Activated CD4-positive, alpha-beta T cell treated with anti-CD3 and anti-CD28 coated beads for 36 hours (primary cell): ENCODE measurements at regions of chr14 and their contacts with region 1.

Region 1: GRCh38 chr14:24431569-24432258 is 2.0 kb downstream of the KHNYN start:
- DNase-seq: peak; percentile 96
- ATAC-seq: peak; percentile 70
- H3K4me3 Mint-ChIP-seq: peak overlapping the region; percentile 94
- H3K27ac Mint-ChIP-seq: peak overlapping the region; percentile 97
- H3K4me1 Mint-ChIP-seq: peaks cover 31% of the 10 kb centered on the region
- H3K27me3 Mint-ChIP-seq: no peaks in the 10 kb centered on the region

Region 2: GRCh38 chr14:24135834-24136542 is 295.7 kb before region 1 on chr14 and contains the start of gene PSME1:
- CTCF ChIA-PET with region 1: interaction called, 3 read pairs
- POLR2A ChIA-PET with region 1: interaction called, 5 read pairs
- intact Hi-C with region 1: loop called in 1 of 2 experiments (anchors 5 kb)
- DNase-seq: peak; percentile 98
- ATAC-seq: peak; percentile 95
- H3K4me3 Mint-ChIP-seq: peak within 1 kb of the TSS; percentile 92
- H3K27ac Mint-ChIP-seq: peak within 1 kb of the TSS; percentile 92
- H3K4me1 Mint-ChIP-seq: peaks cover 50% of the 10 kb centered on the region
- H3K27me3 Mint-ChIP-seq: no peaks in the 10 kb centered on the region
- total RNA-seq, gene PSME1: 414 to 418 TPM

Region 3: GRCh38 chr14:24215495-24216344 is 216.0 kb before region 1 on chr14 and contains the start of gene MDP1:
- CTCF ChIA-PET with region 1: interaction called, 5 read pairs
- POLR2A ChIA-PET with region 1: interaction called, 3 read pairs
- intact Hi-C with region 1: loop called in 1 of 2 experiments (anchors 1 kb)
- DNase-seq: peak; percentile 93
- ATAC-seq: peak; percentile 76
- H3K4me3 Mint-ChIP-seq: peak within 1 kb of the TSS; percentile 92
- H3K27ac Mint-ChIP-seq: peak within 1 kb of the TSS; percentile 95
- H3K4me1 Mint-ChIP-seq: peaks cover 44% of the 10 kb centered on the region
- H3K27me3 Mint-ChIP-seq: no peaks in the 10 kb centered on the region
- total RNA-seq, gene MDP1: 4.5 to 11.7 TPM

Region 4: GRCh38 chr14:24299255-24300195 is 132.2 kb before region 1 on chr14 and contains the starts of genes DHRS1 and NOP9:
- CTCF ChIA-PET with region 1: interaction called, 11 read pairs
- POLR2A ChIA-PET with region 1: interaction called, 3 read pairs
- intact Hi-C with region 1: loop called in 1 of 2 experiments (anchors 1 kb)
- DNase-seq: peak; percentile 96
- ATAC-seq: peak; percentile 67
- H3K4me3 Mint-ChIP-seq: peak within 1 kb of the TSS; percentile 91
- H3K27ac Mint-ChIP-seq: peak within 1 kb of the TSS; percentile 77
- H3K4me1 Mint-ChIP-seq: peaks cover 51% of the 10 kb centered on the region
- H3K27me3 Mint-ChIP-seq: no peaks in the 10 kb centered on the region
- total RNA-seq, gene DHRS1: 11.7 to 14.6 TPM
- total RNA-seq, gene NOP9: 24.4 to 32.5 TPM

Region 5: GRCh38 chr14:24332268-24332993 is 99.3 kb before region 1 on chr14:
- CTCF ChIA-PET with region 1: interaction called, 201 read pairs
- POLR2A ChIA-PET with region 1: interaction called, 31 read pairs
- intact Hi-C with region 1: loop called (anchors 1 kb)
- DNase-seq: peak; percentile 91
- ATAC-seq: peak; percentile 82
- H3K4me3 Mint-ChIP-seq: peak overlapping the region; percentile 53
- H3K27ac Mint-ChIP-seq: peak overlapping the region; percentile 29
- H3K4me1 Mint-ChIP-seq: peaks cover 27% of the 10 kb centered on the region
- H3K27me3 Mint-ChIP-seq: peaks cover 24% of the 10 kb centered on the region

Region 6: DNA sequence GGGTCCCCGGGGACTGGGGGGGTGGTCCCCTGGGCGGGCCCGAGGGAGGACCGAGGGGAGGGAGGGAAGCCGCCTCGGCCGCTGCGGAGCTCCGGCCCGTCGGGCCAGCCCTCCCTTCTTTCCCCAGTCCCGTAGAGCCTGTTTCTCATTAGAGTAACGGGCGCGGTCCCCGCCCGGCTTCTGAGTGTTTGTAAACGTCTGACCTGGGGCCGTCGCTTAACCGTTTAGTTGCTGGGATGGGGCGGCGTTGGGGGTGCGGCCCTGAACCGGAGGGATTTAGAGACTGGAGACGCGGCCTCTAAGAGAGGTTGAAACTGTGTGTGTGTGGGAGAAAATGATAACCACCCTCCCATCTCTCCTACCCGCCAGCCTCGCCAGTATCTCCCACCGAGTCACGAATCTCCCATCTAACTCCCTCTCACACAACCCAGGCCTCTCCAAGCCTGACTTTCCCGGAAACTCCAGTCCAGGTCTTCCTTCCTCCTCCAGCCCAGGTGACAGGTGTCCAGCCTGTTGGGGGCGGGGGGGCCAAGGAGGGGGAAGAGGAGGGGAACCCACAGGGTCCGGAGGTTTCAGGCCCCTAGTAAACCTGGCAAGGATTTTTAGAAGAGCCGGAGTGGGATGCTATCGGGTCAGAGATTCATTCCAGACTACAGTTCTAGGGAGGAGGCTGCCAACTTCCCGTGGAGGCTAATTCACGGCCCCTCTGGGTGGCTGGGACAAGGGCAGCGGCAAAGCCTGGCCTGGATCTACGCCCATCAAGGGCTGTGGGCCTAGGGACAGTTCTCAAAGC is 64.8 kb before region 1 on chr14:
- CTCF ChIA-PET with region 1: interaction called, 34 read pairs
- POLR2A ChIA-PET with region 1: interaction called, 4 read pairs
- intact Hi-C with region 1: loop called (anchors 1 kb)
- DNase-seq: peak; percentile 47
- ATAC-seq: peak; percentile 21
- H3K4me3 Mint-ChIP-seq: peak overlapping the region; percentile 23
- H3K27ac Mint-ChIP-seq: no peak overlapping the region
- H3K4me1 Mint-ChIP-seq: peaks cover 28% of the 10 kb centered on the region
- H3K27me3 Mint-ChIP-seq: peaks cover 41% of the 10 kb centered on the region

Region 7: DNA sequence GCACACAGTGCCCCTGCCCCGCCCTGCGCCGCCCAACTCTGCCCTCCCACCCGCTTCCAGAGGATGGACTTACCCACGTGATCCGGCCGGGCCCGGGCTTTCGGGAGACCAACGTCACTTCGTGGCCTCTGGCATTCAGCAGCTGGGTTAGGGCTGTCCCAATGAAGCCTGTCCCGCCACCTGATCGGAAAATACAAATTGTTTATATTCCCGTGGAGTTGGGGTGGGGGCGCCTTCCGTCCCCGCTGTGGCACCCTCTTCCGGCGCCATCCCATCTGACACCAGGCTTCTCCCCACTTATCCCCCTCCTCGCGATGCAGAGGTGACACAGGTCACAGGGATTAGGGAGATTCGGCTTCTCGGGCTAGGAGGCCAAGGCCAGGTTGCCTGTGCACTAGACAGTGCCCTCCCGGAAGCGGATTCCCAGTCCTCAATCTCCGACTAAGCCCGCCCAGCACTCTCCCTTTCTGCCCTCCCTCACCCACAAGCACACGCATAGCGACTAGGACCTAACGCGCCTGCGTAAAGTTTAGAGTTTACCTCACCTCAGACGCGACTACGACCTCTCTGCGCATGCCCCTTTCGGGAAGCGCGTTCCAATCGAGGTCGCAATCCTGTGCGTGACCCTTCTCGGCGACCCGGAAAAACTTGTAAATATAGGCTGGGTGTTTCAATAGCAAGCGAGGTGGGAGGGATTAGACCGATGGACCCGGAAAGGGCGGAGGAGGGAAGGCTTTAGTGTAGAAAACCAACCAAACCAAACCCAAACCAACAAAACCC is 10.7 kb after region 1 on chr14 and contains the start of gene SDR39U1:
- CTCF ChIA-PET with region 1: interaction called, 66 read pairs
- POLR2A ChIA-PET with region 1: interaction called, 50 read pairs
- intact Hi-C with region 1: loop called (anchors 1 kb)
- DNase-seq: peak; percentile 98
- ATAC-seq: peak; percentile 92
- H3K4me3 Mint-ChIP-seq: peak within 1 kb of the TSS; percentile 97
- H3K27ac Mint-ChIP-seq: peak within 1 kb of the TSS; percentile 99
- H3K4me1 Mint-ChIP-seq: peaks cover 41% of the 10 kb centered on the region
- H3K27me3 Mint-ChIP-seq: no peaks in the 10 kb centered on the region
- total RNA-seq, gene SDR39U1: 40.9 to 47.8 TPM